ENCODE measurements at regions of chr9 and their contacts with region 1.

Region 1: GRCh38 chr9:134163353-134164196 is 789 bp downstream of the RNU6ATAC start:
- DNase-seq: peak; percentile 73
- ATAC-seq: peak; percentile 17
- H3K4me3 Mint-ChIP-seq: peak overlapping the region; percentile 8
- H3K27ac Mint-ChIP-seq: no peak overlapping the region
- H3K4me1 Mint-ChIP-seq: peaks cover 19% of the 10 kb centered on the region
- H3K27me3 Mint-ChIP-seq: no peaks in the 10 kb centered on the region

Region 2: GRCh38 chr9:134135343-134136118 is 28.0 kb before region 1 on chr9 and contains the start of gene WDR5:
- CTCF ChIA-PET with region 1: interaction called, 11 read pairs
- POLR2A ChIA-PET with region 1: interaction called, 21 read pairs
- DNase-seq: peak; percentile 92
- ATAC-seq: peak; percentile 80
- H3K4me3 Mint-ChIP-seq: peak within 1 kb of the TSS; percentile 98
- H3K27ac Mint-ChIP-seq: peak within 1 kb of the TSS; percentile 92
- H3K4me1 Mint-ChIP-seq: peaks cover 31% of the 10 kb centered on the region
- H3K27me3 Mint-ChIP-seq: no peaks in the 10 kb centered on the region
- total RNA-seq, gene WDR5: 43.6 to 47.8 TPM

Measured in activated CD8-positive, alpha-beta T cell treated with anti-CD3 and anti-CD28 coated beads, Interleukin-2, amount 10 ng/mL, durations not matched to agents 7 days and 5 days (primary cell).